MCF 10A (cell line): ENCODE measurements at regions of chr10 and their contacts with region 1.

Region 1: DNA sequence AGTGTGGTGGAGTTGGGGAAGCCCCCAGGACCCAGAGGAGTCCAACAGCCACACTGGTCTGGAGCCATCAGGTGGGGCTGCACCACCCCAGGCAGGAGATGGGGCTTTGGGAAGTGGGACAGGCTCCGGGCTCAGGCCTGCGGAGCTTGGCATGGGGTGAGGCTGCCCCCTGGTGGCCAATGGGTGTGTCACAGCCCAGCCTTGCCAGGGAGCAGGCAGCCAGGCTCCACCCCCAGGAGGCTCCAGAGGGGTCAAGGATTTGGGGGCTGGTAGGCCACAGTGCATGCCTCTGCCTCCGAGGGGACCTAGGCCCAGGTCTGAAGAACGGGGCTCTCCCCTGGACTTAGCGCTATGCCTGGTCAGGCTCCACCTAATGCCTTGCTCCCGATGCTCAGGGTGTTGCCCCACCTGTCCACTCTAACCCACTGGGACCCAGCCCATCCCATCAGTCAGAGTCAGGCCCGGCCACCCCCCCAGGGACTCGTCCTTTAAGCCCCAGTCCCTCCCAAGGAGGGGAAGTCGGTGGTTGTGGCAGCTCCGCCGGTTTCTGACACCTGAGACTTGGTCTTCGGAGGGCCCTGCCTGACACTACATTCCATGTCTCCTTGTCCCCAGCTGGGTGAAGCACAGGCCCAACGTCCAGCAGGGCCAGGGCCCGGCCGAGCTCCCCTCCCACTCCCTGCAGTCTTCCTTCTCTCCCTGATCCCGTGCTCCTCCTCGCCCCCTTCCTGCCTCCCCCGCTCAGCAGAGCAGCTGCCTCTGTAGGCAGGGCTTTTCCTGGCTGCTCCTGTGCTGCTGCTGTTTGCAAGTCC is 11.3 kb upstream of the SAMD8 start:
- DNase-seq: peak; percentile 70
- H3K4me3 Mint-ChIP-seq: no peak overlapping the region
- H3K27ac Mint-ChIP-seq: no peak overlapping the region
- H3K4me1 Mint-ChIP-seq: no peaks in the 10 kb centered on the region
- H3K27me3 Mint-ChIP-seq: no peaks in the 10 kb centered on the region
- CTCF ChIP-seq: peak; percentile 95

Region 2: GRCh38 chr10:74244097-74244685 is 856.0 kb before region 1 on chr10:
- CTCF ChIA-PET with region 1: interaction called, 29 read pairs
- POLR2A ChIA-PET with region 1: interaction called, 3 read pairs
- intact Hi-C with region 1: loop called (anchors 1 kb)
- DNase-seq: peak; percentile 56
- H3K4me3 Mint-ChIP-seq: no peak overlapping the region
- H3K27ac Mint-ChIP-seq: no peak overlapping the region
- H3K4me1 Mint-ChIP-seq: no peaks in the 10 kb centered on the region
- H3K27me3 Mint-ChIP-seq: no peaks in the 10 kb centered on the region
- CTCF ChIP-seq: peak; percentile 32

Region 3: DNA sequence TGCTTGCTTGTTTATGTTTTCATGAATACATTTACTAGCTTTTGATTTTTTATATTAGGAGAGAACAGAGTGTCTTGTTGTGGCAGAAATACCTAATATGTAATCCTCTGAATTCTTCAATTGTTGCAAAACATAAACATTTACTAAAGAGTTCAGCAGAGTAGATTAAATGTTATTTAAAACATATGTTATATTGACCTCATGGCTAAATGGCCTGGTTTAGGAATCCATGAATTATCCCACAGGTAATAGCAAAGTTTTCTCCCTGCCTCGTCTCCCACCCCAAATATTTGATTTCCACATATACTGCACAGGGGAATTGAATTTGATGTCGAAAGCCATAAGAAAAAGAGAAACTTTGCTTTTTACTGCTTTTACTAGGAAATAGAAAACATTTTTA is 837.3 kb before region 1 on chr10:
- CTCF ChIA-PET with region 1: interaction called, 5 read pairs
- POLR2A ChIA-PET with region 1: no interaction called
- intact Hi-C with region 1: loop called (anchors 1 kb)
- DNase-seq: no peak
- H3K4me3 Mint-ChIP-seq: no peak overlapping the region
- H3K27ac Mint-ChIP-seq: no peak overlapping the region
- H3K4me1 Mint-ChIP-seq: peaks cover 4% of the 10 kb centered on the region
- H3K27me3 Mint-ChIP-seq: no peaks in the 10 kb centered on the region
- CTCF ChIP-seq: no peak

Region 4: GRCh38 chr10:74799721-74800221 is 300.4 kb before region 1 on chr10:
- CTCF ChIA-PET with region 1: no interaction called
- POLR2A ChIA-PET with region 1: no interaction called
- intact Hi-C with region 1: no loop called
- DNase-seq: peak; percentile 97
- H3K4me3 Mint-ChIP-seq: no peak overlapping the region
- H3K27ac Mint-ChIP-seq: no peak overlapping the region
- H3K4me1 Mint-ChIP-seq: no peaks in the 10 kb centered on the region
- H3K27me3 Mint-ChIP-seq: no peaks in the 10 kb centered on the region
- CTCF ChIP-seq: no peak

Region 5: GRCh38 chr10:74826142-74827044 is 273.8 kb before region 1 on chr10 and contains the start of gene KAT6B:
- CTCF ChIA-PET with region 1: no interaction called
- POLR2A ChIA-PET with region 1: no interaction called
- intact Hi-C with region 1: loop called (anchors 5 kb)
- DNase-seq: peak; percentile 100
- H3K4me3 Mint-ChIP-seq: peak within 1 kb of the TSS; percentile 78
- H3K27ac Mint-ChIP-seq: peak within 1 kb of the TSS; percentile 95
- H3K4me1 Mint-ChIP-seq: peaks cover 35% of the 10 kb centered on the region
- H3K27me3 Mint-ChIP-seq: no peaks in the 10 kb centered on the region
- CTCF ChIP-seq: peak; percentile 21
- total RNA-seq, gene KAT6B: 16.4 and 18.3 TPM in 2 replicates

Region 6: GRCh38 chr10:74888962-74889663 is 211.0 kb before region 1 on chr10:
- CTCF ChIA-PET with region 1: interaction called, 4 read pairs
- POLR2A ChIA-PET with region 1: no interaction called
- intact Hi-C with region 1: loop called (anchors 10 kb)
- DNase-seq: peak; percentile 30
- H3K4me3 Mint-ChIP-seq: no peak overlapping the region
- H3K27ac Mint-ChIP-seq: no peak overlapping the region
- H3K4me1 Mint-ChIP-seq: no peaks in the 10 kb centered on the region
- H3K27me3 Mint-ChIP-seq: no peaks in the 10 kb centered on the region
- CTCF ChIP-seq: no peak

Region 7: GRCh38 chr10:75019370-75019769 is 80.8 kb before region 1 on chr10:
- CTCF ChIA-PET with region 1: interaction called, 23 read pairs
- POLR2A ChIA-PET with region 1: no interaction called
- intact Hi-C with region 1: loop called (anchors 5 kb)
- DNase-seq: peak; percentile 38
- H3K4me3 Mint-ChIP-seq: no peak overlapping the region
- H3K27ac Mint-ChIP-seq: no peak overlapping the region
- H3K4me1 Mint-ChIP-seq: no peaks in the 10 kb centered on the region
- H3K27me3 Mint-ChIP-seq: no peaks in the 10 kb centered on the region
- CTCF ChIP-seq: peak; percentile 47